CD8-positive, alpha-beta T cell (primary cell): ENCODE measurements at regions of chr12 and their contacts with region 1.

Region 1: GRCh38 chr12:53321074-53321814 is at the start of gene AAAS:
- DNase-seq: peak; percentile 85 to 97 (median 95)
- ATAC-seq: peak; percentile 82
- H3K4me3 ChIP-seq: peak within 1 kb of the TSS; percentile 67 to 99
- H3K4me3 Mint-ChIP-seq: peak within 1 kb of the TSS; percentile 97
- H3K27ac ChIP-seq: peak within 1 kb of the TSS; percentile 67 to 80
- H3K27ac Mint-ChIP-seq: peak within 1 kb of the TSS; percentile 92
- H3K4me1 ChIP-seq: peaks cover 31% of the 10 kb centered on the region
- H3K4me1 Mint-ChIP-seq: peaks cover 42% of the 10 kb centered on the region
- H3K27me3 ChIP-seq: no peaks in the 10 kb centered on the region
- H3K27me3 Mint-ChIP-seq: no peaks in the 10 kb centered on the region
- CTCF ChIP-seq: peak; percentile 99
- total RNA-seq, gene AAAS: 17.0 to 21.5 TPM

Region 2: DNA sequence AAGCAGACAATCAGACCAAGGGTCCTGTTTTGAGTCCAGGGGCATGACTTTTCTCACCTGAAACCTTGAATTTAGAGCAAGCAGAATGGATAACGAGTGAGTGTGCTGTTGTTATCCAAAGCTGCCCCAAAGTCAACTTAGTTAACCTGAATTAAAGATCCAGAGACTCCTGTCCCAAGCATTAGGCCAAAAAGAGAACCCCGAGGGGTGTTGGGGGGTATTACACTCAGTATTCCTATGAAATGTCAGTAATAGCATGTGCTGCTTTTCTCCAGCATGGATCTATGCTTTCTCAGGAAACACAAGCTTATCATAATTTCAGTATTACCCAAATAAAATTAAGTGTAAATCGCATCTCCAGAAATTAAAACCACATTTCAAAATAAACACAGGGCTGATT is 296.0 kb before region 1 on chr12:
- CTCF ChIA-PET with region 1: no interaction called
- POLR2A ChIA-PET with region 1: no interaction called
- intact Hi-C with region 1: no loop called
- DNase-seq: no peak
- ATAC-seq: no peak
- H3K4me3 ChIP-seq: no peak overlapping the region
- H3K4me3 Mint-ChIP-seq: no peak overlapping the region
- H3K27ac ChIP-seq: no peak overlapping the region
- H3K27ac Mint-ChIP-seq: no peak overlapping the region
- H3K4me1 ChIP-seq: no peaks in the 10 kb centered on the region
- H3K4me1 Mint-ChIP-seq: peaks cover 2% of the 10 kb centered on the region
- H3K27me3 ChIP-seq: no peaks in the 10 kb centered on the region
- H3K27me3 Mint-ChIP-seq: no peaks in the 10 kb centered on the region
- CTCF ChIP-seq: no peak

Region 3: GRCh38 chr12:53046655-53047220 is 274.5 kb before region 1 on chr12:
- CTCF ChIA-PET with region 1: no interaction called
- POLR2A ChIA-PET with region 1: no interaction called
- intact Hi-C with region 1: no loop called
- DNase-seq: peak in 4 of 9 experiments; percentile 27 to 72 (median 49)
- ATAC-seq: peak; percentile 27
- H3K4me3 ChIP-seq: peak overlapping the region; percentile 42 to 85
- H3K4me3 Mint-ChIP-seq: peak overlapping the region; percentile 97
- H3K27ac ChIP-seq: peak overlapping the region; percentile 48 to 69
- H3K27ac Mint-ChIP-seq: peak overlapping the region; percentile 92
- H3K4me1 ChIP-seq: peaks cover 5% of the 10 kb centered on the region
- H3K4me1 Mint-ChIP-seq: peaks cover 11% of the 10 kb centered on the region
- H3K27me3 ChIP-seq: no peaks in the 10 kb centered on the region
- H3K27me3 Mint-ChIP-seq: no peaks in the 10 kb centered on the region
- CTCF ChIP-seq: no peak

Region 4: DNA sequence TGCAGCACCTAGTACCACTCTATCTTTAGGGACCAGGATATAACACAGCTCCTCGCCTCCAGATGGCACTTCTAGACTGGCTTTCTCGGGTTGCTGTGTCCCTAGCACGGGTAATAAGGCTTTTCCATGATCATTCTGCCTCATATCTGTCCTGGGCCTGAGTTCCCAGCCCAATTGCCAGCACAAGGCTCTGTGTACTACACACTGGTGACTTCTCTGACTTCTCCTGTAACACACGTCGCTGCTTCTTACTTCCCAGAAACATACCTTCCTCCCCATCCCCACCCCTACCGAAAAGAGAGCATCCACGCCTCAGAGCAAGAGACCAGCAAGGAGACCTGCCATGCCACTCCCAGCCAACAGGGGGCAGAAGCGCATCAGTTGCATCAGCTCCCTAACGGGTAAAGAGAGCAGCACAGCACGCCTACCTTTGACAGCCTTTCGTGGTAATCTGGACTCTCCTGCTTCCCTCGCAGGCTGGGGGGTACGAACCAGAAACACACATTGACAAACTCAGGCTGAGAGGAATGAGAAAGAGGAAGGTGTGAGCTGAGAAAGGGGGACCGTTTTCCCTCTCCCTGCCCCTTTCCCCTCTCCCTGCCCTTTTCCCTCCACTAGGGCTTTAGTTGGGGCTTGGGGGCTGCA is 161.9 kb before region 1 on chr12:
- CTCF ChIA-PET with region 1: interaction called, 6 read pairs
- POLR2A ChIA-PET with region 1: interaction called, 3 read pairs
- intact Hi-C with region 1: loop called (anchors 1 kb)
- DNase-seq: peak; percentile 81 to 94 (median 89)
- ATAC-seq: peak; percentile 100
- H3K4me3 ChIP-seq: no peak overlapping the region
- H3K4me3 Mint-ChIP-seq: no peak overlapping the region
- H3K27ac ChIP-seq: no peak overlapping the region
- H3K27ac Mint-ChIP-seq: peak overlapping the region; percentile 1
- H3K4me1 ChIP-seq: peaks cover 8% of the 10 kb centered on the region
- H3K4me1 Mint-ChIP-seq: peaks cover 6% of the 10 kb centered on the region
- H3K27me3 ChIP-seq: no peaks in the 10 kb centered on the region
- H3K27me3 Mint-ChIP-seq: no peaks in the 10 kb centered on the region
- CTCF ChIP-seq: peak; percentile 97

Region 5: DNA sequence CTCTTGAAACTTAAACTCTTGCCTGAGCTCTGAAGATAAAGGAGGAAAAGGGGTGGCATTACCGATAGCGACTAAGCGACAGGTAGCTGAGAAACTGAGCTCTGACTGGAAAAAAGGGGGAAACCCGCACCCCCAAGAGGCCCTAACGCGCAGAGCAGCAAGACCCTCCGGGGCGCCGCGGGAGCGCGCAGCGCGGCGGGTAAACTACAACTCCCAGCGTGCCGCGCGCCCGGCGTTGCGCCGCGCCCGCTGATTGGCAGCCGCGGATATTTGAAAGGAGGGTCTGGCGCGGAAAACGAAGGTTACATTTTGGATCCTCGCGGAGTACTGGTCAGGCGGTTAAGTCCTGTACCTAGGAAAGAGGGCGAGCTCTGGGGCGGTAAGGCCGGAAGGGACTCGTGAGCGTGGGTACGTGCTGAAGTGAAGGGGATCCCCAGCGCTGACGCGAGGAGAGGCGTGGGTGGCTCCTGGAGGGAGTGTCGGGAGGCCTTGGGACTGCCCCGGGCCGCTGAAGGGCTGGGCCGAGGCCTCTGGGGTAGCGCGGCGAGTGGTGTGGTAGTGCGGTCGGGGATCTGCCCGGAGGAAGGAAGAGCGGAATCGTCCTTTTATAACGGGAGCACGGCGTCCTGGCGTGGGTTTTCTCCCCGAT is 53.1 kb before region 1 on chr12 and contains the start of gene ESPL1:
- CTCF ChIA-PET with region 1: no interaction called
- POLR2A ChIA-PET with region 1: interaction called, 5 read pairs
- intact Hi-C with region 1: loop called (anchors 1 kb)
- DNase-seq: peak; percentile 67 to 94 (median 84)
- ATAC-seq: peak; percentile 95
- H3K4me3 ChIP-seq: peak within 1 kb of the TSS; percentile 66 to 69
- H3K4me3 Mint-ChIP-seq: peak within 1 kb of the TSS; percentile 97
- H3K27ac ChIP-seq: peak within 1 kb of the TSS; percentile 25 to 68
- H3K27ac Mint-ChIP-seq: peak within 1 kb of the TSS; percentile 94
- H3K4me1 ChIP-seq: peaks cover 5% of the 10 kb centered on the region
- H3K4me1 Mint-ChIP-seq: peaks cover 17% of the 10 kb centered on the region
- H3K27me3 ChIP-seq: no peaks in the 10 kb centered on the region
- H3K27me3 Mint-ChIP-seq: no peaks in the 10 kb centered on the region
- CTCF ChIP-seq: peak; percentile 45
- total RNA-seq, gene ESPL1: 0.56 to 1.7 TPM

Region 6: GRCh38 chr12:53344824-53345485 is 23.7 kb after region 1 on chr12:
- CTCF ChIA-PET with region 1: interaction called, 202 read pairs
- POLR2A ChIA-PET with region 1: interaction called, 53 read pairs
- intact Hi-C with region 1: loop called (anchors 1 kb)
- DNase-seq: peak; percentile 44 to 85 (median 70)
- ATAC-seq: peak; percentile 85
- H3K4me3 ChIP-seq: peak overlapping the region; percentile 61 to 72
- H3K4me3 Mint-ChIP-seq: peak overlapping the region; percentile 93
- H3K27ac ChIP-seq: peak overlapping the region; percentile 27 to 47
- H3K27ac Mint-ChIP-seq: peak overlapping the region; percentile 77
- H3K4me1 ChIP-seq: peaks cover 16% of the 10 kb centered on the region
- H3K4me1 Mint-ChIP-seq: peaks cover 15% of the 10 kb centered on the region
- H3K27me3 ChIP-seq: no peaks in the 10 kb centered on the region
- H3K27me3 Mint-ChIP-seq: no peaks in the 10 kb centered on the region
- CTCF ChIP-seq: peak; percentile 58

Region 7: DNA sequence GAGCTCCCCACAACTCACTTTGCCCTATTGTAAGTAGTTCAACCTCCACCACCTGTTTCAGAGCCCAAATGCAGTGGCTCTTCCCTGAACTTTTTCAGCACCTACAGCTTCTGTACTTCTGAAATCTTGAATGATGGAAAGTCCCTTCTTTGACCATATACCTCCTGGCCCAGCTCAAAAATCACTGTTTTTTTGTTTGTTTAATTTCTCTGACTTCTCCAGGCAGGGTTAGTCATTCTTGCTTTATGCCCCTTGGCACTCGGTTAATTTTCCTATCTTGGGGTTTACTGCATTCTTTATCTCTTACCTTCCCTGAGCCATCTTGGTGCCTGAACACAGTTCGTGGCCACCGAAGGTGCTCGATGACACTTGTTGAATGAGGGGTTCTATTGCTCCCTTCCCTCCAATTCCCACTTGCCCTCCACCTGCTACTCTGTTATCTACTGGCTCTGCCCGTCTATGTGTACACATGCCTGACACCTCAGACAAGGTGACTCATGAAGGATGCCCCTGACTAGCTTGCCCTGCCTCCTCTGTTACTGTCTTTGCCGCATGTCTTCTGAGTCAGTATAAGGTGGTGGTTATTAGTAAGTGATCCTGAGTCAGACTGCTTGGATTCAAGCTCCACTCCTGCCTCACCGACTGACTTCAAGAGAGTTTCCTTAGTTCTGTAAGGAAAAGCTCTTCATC is 106.8 kb after region 1 on chr12:
- CTCF ChIA-PET with region 1: interaction called, 24 read pairs
- POLR2A ChIA-PET with region 1: no interaction called
- intact Hi-C with region 1: no loop called
- DNase-seq: peak in 1 of 9 experiments; percentile 13
- ATAC-seq: no peak
- H3K4me3 ChIP-seq: no peak overlapping the region
- H3K4me3 Mint-ChIP-seq: no peak overlapping the region
- H3K27ac ChIP-seq: no peak overlapping the region
- H3K27ac Mint-ChIP-seq: no peak overlapping the region
- H3K4me1 ChIP-seq: no peaks in the 10 kb centered on the region
- H3K4me1 Mint-ChIP-seq: no peaks in the 10 kb centered on the region
- H3K27me3 ChIP-seq: no peaks in the 10 kb centered on the region
- H3K27me3 Mint-ChIP-seq: no peaks in the 10 kb centered on the region
- CTCF ChIP-seq: no peak

Region 8: GRCh38 chr12:53500776-53501614 is 179.8 kb after region 1 on chr12 and contains the start of gene TARBP2:
- CTCF ChIA-PET with region 1: interaction called, 3 read pairs
- POLR2A ChIA-PET with region 1: interaction called, 20 read pairs
- intact Hi-C with region 1: loop called (anchors 1 to 10 kb)
- DNase-seq: peak; percentile 92 to 99 (median 98)
- ATAC-seq: peak; percentile 77
- H3K4me3 ChIP-seq: peak within 1 kb of the TSS; percentile 64 to 87
- H3K4me3 Mint-ChIP-seq: peak within 1 kb of the TSS; percentile 93
- H3K27ac ChIP-seq: peak within 1 kb of the TSS; percentile 90 to 95
- H3K27ac Mint-ChIP-seq: peak within 1 kb of the TSS; percentile 97
- H3K4me1 ChIP-seq: peaks cover 28% of the 10 kb centered on the region
- H3K4me1 Mint-ChIP-seq: peaks cover 48% of the 10 kb centered on the region
- H3K27me3 ChIP-seq: no peaks in the 10 kb centered on the region
- H3K27me3 Mint-ChIP-seq: no peaks in the 10 kb centered on the region
- CTCF ChIP-seq: no peak
- total RNA-seq, gene TARBP2: 22.9 to 23.9 TPM